ENCODE measurements at regions of chr6 and their contacts with region 1.

Region 1: DNA sequence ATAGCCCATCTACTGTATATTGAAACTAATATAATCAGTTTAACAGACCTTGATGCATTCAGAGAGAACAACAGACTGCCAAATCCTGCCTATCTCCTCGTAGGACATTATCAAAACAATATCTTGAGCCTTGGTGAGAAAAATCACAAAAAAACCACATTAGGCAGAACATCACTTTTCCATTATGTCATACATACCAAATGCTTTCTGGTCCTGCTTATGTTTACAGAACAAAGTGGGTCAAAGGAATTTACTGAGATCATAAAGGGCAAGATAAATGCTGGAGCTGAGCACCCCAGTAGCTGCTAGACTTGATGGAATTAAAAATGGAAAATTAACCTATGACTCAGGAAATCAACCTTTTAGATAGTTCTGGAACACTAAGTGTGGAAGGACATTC is 195.3 kb upstream of the KCNK16 start:
- DNase-seq: no peak
- H3K4me3 ChIP-seq: no peak overlapping the region
- H3K4me3 Mint-ChIP-seq: no peak overlapping the region
- H3K27ac Mint-ChIP-seq: no peak overlapping the region
- H3K4me1 ChIP-seq: no peaks in the 10 kb centered on the region
- H3K4me1 Mint-ChIP-seq: no peaks in the 10 kb centered on the region
- H3K27me3 ChIP-seq: no peaks in the 10 kb centered on the region; the same call in 1 of the 2 replicates
- H3K27me3 Mint-ChIP-seq: peaks cover 9% of the 10 kb centered on the region
- CTCF ChIP-seq: no peak

Region 2: DNA sequence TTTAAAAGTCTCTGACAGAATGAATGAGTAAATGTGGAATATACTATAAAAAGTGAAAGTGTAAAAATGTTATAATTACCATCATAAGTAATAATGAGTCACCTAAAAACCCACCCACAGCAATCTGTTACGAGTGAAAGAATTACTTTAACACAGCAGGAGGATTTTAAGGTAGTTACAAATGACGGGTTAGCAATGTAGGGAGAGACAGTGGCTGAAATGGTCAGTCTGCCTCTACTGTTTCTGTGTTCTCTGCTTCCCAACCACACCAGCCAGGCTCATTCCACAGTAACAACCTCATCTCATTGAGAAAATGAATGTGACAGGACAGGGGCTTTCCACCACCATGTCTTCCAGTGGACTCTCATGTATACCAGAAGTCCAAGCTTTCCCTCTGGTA is 70.8 kb before region 1 on chr6:
- CTCF ChIA-PET with region 1: no interaction called
- POLR2A ChIA-PET with region 1: no interaction called
- intact Hi-C with region 1: loop called (anchors 2 kb)
- DNase-seq: no peak
- H3K4me3 ChIP-seq: no peak overlapping the region
- H3K4me3 Mint-ChIP-seq: no peak overlapping the region
- H3K27ac Mint-ChIP-seq: no peak overlapping the region
- H3K4me1 ChIP-seq: no peaks in the 10 kb centered on the region
- H3K4me1 Mint-ChIP-seq: no peaks in the 10 kb centered on the region
- H3K27me3 ChIP-seq: no peaks in the 10 kb centered on the region
- H3K27me3 Mint-ChIP-seq: peaks cover 19% of the 10 kb centered on the region
- CTCF ChIP-seq: no peak

Region 3: GRCh38 chr6:39530201-39530759 is 12.5 kb after region 1 on chr6:
- CTCF ChIA-PET with region 1: no interaction called
- POLR2A ChIA-PET with region 1: no interaction called
- intact Hi-C with region 1: no loop called
- DNase-seq: no peak
- H3K4me3 ChIP-seq: no peak overlapping the region
- H3K4me3 Mint-ChIP-seq: no peak overlapping the region
- H3K27ac Mint-ChIP-seq: no peak overlapping the region
- H3K4me1 ChIP-seq: no peaks in the 10 kb centered on the region
- H3K4me1 Mint-ChIP-seq: no peaks in the 10 kb centered on the region
- H3K27me3 ChIP-seq: no peaks in the 10 kb centered on the region
- H3K27me3 Mint-ChIP-seq: peaks cover 16% of the 10 kb centered on the region
- CTCF ChIP-seq: no peak

Measured in Caco-2 (cell line).